Activated CD4-positive, alpha-beta T cell treated with anti-CD3 and anti-CD28 coated beads for 36 hours (primary cell): ENCODE measurements at regions of chr22 and their contacts with region 1.

Region 1: DNA sequence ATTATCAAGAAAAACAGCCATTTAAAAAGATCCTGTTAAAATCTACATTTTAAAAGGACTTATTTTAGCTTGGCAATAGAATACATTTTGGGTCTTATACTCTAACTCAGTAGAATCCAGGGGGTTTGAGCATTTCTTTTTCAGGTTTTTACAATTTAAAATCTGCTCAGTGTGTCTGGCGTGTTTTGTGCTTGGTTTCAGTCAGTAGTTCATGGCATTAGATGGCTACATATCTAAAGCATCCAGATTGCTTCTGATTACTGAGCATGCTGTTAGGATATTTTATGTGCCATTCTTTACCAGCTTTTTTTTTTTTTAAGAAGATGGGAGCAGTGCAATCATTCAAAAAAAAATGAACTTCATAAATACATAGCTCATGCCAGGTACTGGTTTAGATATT is 566.1 kb upstream of the LARGE1 start:
- DNase-seq: no peak
- ATAC-seq: no peak
- H3K4me3 Mint-ChIP-seq: no peak overlapping the region
- H3K27ac Mint-ChIP-seq: no peak overlapping the region
- H3K4me1 Mint-ChIP-seq: no peaks in the 10 kb centered on the region
- H3K27me3 Mint-ChIP-seq: no peaks in the 10 kb centered on the region

Region 2: DNA sequence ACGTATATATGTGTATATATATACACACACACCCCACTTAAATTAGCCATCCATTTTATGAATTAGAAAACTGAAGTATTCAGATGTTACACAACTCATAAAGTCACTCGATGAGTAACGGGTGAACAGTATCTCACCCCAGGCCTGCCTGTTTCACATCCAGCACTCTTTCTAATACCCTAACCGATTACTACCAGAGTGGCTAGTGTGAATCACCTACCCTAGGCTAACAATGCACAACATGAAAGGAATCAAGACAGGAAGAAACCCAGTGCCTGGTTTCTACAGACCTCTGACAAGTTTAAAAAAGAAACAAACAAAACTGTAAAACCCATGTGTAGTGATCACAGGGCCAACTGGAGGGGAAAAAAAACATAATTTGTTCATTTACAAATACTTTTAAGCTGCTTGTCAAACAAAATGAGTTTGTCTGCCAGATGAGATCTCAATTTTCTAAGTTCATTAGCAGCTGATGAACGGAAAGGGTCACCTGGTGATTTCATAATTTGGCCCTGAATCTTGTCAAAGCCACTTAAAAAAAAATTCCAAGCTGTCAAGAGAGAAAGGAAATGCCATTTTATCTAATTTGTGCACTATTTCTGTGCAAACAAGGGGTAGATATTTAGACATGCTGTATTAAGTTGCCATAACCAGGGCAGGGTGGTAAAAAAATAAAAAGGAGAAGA is 701.0 kb before region 1 on chr22:
- CTCF ChIA-PET with region 1: no interaction called
- POLR2A ChIA-PET with region 1: no interaction called
- intact Hi-C with region 1: no loop called
- DNase-seq: no peak
- ATAC-seq: peak; percentile 49
- H3K4me3 Mint-ChIP-seq: no peak overlapping the region
- H3K27ac Mint-ChIP-seq: no peak overlapping the region
- H3K4me1 Mint-ChIP-seq: peaks cover 3% of the 10 kb centered on the region
- H3K27me3 Mint-ChIP-seq: no peaks in the 10 kb centered on the region

Region 3: GRCh38 chr22:34429314-34429713 is 57.1 kb before region 1 on chr22:
- CTCF ChIA-PET with region 1: no interaction called
- POLR2A ChIA-PET with region 1: no interaction called
- intact Hi-C with region 1: loop called in 1 of 2 experiments (anchors 10 kb)
- DNase-seq: peak; percentile 46
- ATAC-seq: peak; percentile 19
- H3K4me3 Mint-ChIP-seq: no peak overlapping the region
- H3K27ac Mint-ChIP-seq: no peak overlapping the region
- H3K4me1 Mint-ChIP-seq: peaks cover 2% of the 10 kb centered on the region
- H3K27me3 Mint-ChIP-seq: no peaks in the 10 kb centered on the region